PC-9 (cell line): ENCODE measurements at regions of chr20 and their contacts with region 1.

Region 1: GRCh38 chr20:4925842-4926530 is 75.3 kb downstream of the SLC23A2 start:
- DNase-seq: no peak
- H3K4me3 ChIP-seq: no peak overlapping the region
- H3K27ac ChIP-seq: no peak overlapping the region
- H3K4me1 ChIP-seq: 0 out of 2 replicates have a peak, but pooled peaks cover 9% of the 10 kb centered on the region
- H3K27me3 ChIP-seq: no peaks in the 10 kb centered on the region
- CTCF ChIP-seq: no peak

Region 2: GRCh38 chr20:4808872-4809271 is 117.1 kb before region 1 on chr20:
- CTCF ChIA-PET with region 1: no interaction called
- POLR2A ChIA-PET with region 1: interaction called, 14 read pairs
- intact Hi-C with region 1: no loop called
- DNase-seq: no peak
- H3K4me3 ChIP-seq: no peak overlapping the region
- H3K27ac ChIP-seq: no peak overlapping the region
- H3K4me1 ChIP-seq: no peaks in the 10 kb centered on the region
- H3K27me3 ChIP-seq: no peaks in the 10 kb centered on the region
- CTCF ChIP-seq: no peak

Region 3: GRCh38 chr20:4944518-4945313 is 18.7 kb after region 1 on chr20:
- CTCF ChIA-PET with region 1: no interaction called
- POLR2A ChIA-PET with region 1: no interaction called
- intact Hi-C with region 1: no loop called
- DNase-seq: no peak
- H3K4me3 ChIP-seq: no peak overlapping the region
- H3K27ac ChIP-seq: no peak overlapping the region
- H3K4me1 ChIP-seq: peaks cover 5% of the 10 kb centered on the region; the same call in 1 of the 2 replicates
- H3K27me3 ChIP-seq: no peaks in the 10 kb centered on the region
- CTCF ChIP-seq: no peak

Region 4: GRCh38 chr20:5135363-5136012 is 209.5 kb after region 1 on chr20:
- CTCF ChIA-PET with region 1: interaction called, 18 read pairs
- POLR2A ChIA-PET with region 1: no interaction called
- intact Hi-C with region 1: no loop called
- DNase-seq: no peak
- H3K4me3 ChIP-seq: no peak overlapping the region
- H3K27ac ChIP-seq: no peak overlapping the region
- H3K4me1 ChIP-seq: no peaks in the 10 kb centered on the region
- H3K27me3 ChIP-seq: no peaks in the 10 kb centered on the region
- CTCF ChIP-seq: no peak